AG04449 (cell line): ENCODE measurements at regions of chr18 and their contacts with region 1.

Region 1: GRCh38 chr18:63320046-63320689 is 599 bp upstream of the BCL2 start:
- DNase-seq: no peak
- H3K4me3 ChIP-seq: peak overlapping the region; percentile 76
- CTCF ChIP-seq: no peak

Region 2: GRCh38 chr18:63025251-63026090 is 294.7 kb before region 1 on chr18:
- CTCF ChIA-PET with region 1: interaction called, 184 read pairs
- POLR2A ChIA-PET with region 1: no interaction called
- DNase-seq: no peak
- H3K4me3 ChIP-seq: no peak overlapping the region
- CTCF ChIP-seq: no peak

Region 3: GRCh38 chr18:63119647-63120046 is 200.5 kb before region 1 on chr18:
- CTCF ChIA-PET with region 1: interaction called, 37 read pairs
- POLR2A ChIA-PET with region 1: interaction called, 3 read pairs
- DNase-seq: no peak
- H3K4me3 ChIP-seq: no peak overlapping the region
- CTCF ChIP-seq: peak; percentile 29

Region 4: GRCh38 chr18:63131106-63131958 is 188.8 kb before region 1 on chr18:
- CTCF ChIA-PET with region 1: interaction called, 287 read pairs
- POLR2A ChIA-PET with region 1: no interaction called
- DNase-seq: no peak
- H3K4me3 ChIP-seq: no peak overlapping the region
- CTCF ChIP-seq: peak; percentile 49

Region 5: DNA sequence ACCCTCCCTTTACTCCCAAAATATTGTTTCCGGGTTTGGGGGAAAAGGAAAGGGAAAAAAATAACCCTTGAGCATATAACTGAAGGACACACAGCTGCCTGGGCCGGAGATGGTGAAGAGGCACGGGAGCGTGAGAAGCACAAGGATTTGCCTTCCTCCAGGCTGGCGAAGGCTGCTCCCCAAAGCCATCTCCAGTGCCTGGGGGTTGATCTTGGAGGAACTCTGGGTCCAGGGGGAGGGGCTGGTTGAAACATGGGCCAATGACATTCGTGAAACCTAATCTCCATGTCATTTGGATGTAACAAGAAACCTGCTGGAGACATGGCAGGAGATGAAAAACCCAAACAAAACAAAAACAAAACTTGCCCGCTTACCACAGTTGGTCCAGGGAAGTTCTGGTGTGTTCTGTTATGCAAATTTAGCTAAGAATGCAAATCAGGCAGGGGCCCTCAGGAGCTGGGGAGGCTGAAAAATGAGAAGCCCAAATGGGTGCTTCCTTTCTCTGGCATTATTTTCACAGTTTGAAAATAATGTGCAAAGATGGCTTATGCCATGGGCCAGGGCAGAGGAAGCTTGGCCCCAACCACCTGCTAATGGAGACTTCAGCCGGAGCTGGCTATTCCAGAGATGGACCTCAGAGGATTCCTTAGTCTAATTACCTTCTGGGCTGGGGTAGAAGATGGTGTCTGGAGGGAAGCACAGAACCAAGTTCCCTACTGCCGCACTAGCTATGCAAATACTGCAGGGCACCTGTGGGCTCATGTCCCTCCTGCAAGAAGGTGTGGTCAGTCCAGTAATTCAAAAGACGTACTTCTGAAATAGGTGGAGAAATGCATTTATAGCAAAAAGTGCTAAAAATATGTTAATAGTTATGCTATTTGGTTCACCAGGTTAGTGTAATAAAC is 181.5 kb before region 1 on chr18:
- CTCF ChIA-PET with region 1: interaction called, 287 read pairs
- POLR2A ChIA-PET with region 1: no interaction called
- DNase-seq: no peak
- H3K4me3 ChIP-seq: peak overlapping the region; percentile 1; the same call in 1 of the 2 replicates
- CTCF ChIP-seq: no peak

Region 6: DNA sequence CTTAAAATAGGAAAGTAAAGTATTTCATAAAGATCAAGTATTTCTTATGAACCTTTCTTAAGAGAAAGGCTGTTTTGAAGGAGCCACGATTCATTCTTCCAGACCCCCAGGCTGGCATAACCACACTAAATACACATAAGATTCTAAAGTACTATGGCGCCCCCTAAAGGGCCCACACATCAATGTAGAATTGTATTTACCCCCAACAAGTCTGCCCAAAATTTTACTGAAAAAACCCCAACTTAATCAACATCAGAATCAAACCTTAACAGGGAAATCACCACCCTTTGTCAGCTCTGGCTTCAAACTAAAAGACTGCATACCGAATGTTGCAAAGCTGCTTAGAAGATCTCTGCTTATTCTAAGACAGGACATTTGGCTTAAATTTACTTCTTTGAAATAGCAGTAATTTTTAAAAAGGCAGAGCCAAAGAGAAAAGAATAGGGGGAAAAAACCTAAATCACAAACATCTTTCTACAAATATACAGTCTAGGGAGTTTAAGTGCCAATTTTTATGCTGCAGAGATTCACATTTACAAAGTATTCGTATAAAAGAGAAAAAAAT is 19.8 kb after region 1 on chr18:
- CTCF ChIA-PET with region 1: interaction called, 80 read pairs
- POLR2A ChIA-PET with region 1: no interaction called
- DNase-seq: no peak
- H3K4me3 ChIP-seq: no peak overlapping the region
- CTCF ChIP-seq: peak; percentile 31